Breast epithelium (tissue), 4 donors: ENCODE measurements at regions of chr12 and their contacts with region 1.

Region 1: DNA sequence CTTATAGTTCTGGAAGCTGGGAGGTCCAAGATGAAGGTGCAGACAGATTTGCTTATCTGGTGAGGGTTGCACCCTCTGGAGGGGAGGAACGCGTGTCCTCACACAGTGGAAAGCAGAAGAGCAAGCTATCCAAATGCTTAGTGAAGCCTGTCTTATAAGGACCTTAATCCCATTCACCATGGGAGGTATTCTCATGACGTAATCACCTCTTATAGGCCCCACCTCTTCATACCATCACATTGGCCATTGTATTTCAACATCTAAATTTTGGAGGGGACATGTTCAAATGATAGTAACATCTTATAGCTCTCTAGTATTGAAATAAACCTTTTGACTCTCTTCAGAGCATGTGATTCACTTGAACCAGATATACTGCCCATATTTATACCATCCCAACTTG is 105.0 kb upstream of the MYF6 start:
- DNase-seq: no peak
- H3K4me3 ChIP-seq: no peak overlapping the region
- H3K27ac ChIP-seq: no peak overlapping the region
- H3K4me1 ChIP-seq: no peaks in the 10 kb centered on the region
- H3K27me3 ChIP-seq: no peaks in the 10 kb centered on the region
- CTCF ChIP-seq: no peak
- POLR2A ChIP-seq: no peak

Region 2: DNA sequence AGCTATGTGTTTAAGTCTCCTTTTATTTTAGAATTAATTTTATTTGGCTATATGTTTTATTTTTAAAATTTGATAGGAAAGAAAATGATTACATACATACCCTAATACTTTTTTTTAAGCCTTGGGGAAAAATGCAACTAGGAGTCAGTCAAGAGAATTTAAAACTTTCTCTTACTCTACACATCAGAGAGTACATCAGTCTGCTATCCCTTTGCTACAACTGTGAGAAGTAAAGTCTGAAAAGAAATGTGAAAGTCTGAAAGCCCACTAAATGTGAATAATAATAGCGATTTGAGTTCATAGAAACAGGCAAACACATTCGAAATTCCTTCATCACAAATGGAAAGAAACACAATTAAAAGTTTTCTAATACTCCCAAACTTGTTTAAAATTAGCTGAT is 63.4 kb before region 1 on chr12:
- intact Hi-C with region 1: no loop called
- DNase-seq: no peak
- H3K4me3 ChIP-seq: no peak overlapping the region
- H3K27ac ChIP-seq: no peak overlapping the region
- H3K4me1 ChIP-seq: no peaks in the 10 kb centered on the region
- H3K27me3 ChIP-seq: no peaks in the 10 kb centered on the region
- CTCF ChIP-seq: no peak
- POLR2A ChIP-seq: no peak

Region 3: GRCh38 chr12:81417056-81417455 is 814.6 kb after region 1 on chr12:
- intact Hi-C with region 1: loop called (anchors 5 kb)
- DNase-seq: no peak
- H3K4me3 ChIP-seq: no peak overlapping the region
- H3K27ac ChIP-seq: no peak overlapping the region
- H3K4me1 ChIP-seq: no peaks in the 10 kb centered on the region
- H3K27me3 ChIP-seq: no peaks in the 10 kb centered on the region
- CTCF ChIP-seq: no peak
- POLR2A ChIP-seq: no peak